A549 (cell line): ENCODE measurements at regions of chr4 and their contacts with region 1.

Region 1: GRCh38 chr4:76179398-76180318 is 31.5 kb upstream of the NUP54 start:
- DNase-seq: peak; percentile 78 to 84
- ATAC-seq: peak; percentile 94 to 98
- H3K4me3 ChIP-seq: no peak overlapping the region
- H3K27ac ChIP-seq: no peak overlapping the region
- H3K4me1 ChIP-seq: no peaks in the 10 kb centered on the region
- CTCF ChIP-seq: peak; percentile 76
- EP300 ChIP-seq: no peak
- POLR2A ChIP-seq: no peak
- RAD21 ChIP-seq: peak; percentile 77 to 84

Region 2: DNA sequence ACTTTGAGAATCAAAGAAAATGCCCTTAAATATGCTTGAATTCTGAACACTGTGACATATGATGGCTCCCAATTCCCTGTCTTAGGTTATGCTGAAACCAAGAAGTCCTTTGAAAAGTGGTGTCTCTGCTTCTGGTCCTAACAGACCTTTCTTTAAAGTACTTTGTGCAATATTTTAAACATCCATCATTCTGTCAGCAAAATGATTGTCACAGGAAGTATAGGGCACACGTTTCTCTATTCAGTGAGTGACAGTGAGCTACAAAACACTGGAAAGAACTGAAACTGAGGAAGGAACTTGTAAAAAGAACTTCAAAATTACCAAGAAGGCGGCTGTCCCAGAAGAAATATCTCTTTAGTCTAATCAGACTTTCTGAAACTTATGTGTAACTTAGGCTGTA is 19.3 kb before region 1 on chr4:
- CTCF ChIA-PET with region 1: interaction called, 18 read pairs
- POLR2A ChIA-PET with region 1: no interaction called
- DNase-seq: no peak
- ATAC-seq: no peak
- H3K4me3 ChIP-seq: no peak overlapping the region
- H3K27ac ChIP-seq: no peak overlapping the region
- H3K4me1 ChIP-seq: no peaks in the 10 kb centered on the region
- CTCF ChIP-seq: no peak
- EP300 ChIP-seq: no peak
- POLR2A ChIP-seq: no peak
- RAD21 ChIP-seq: no peak

Region 3: DNA sequence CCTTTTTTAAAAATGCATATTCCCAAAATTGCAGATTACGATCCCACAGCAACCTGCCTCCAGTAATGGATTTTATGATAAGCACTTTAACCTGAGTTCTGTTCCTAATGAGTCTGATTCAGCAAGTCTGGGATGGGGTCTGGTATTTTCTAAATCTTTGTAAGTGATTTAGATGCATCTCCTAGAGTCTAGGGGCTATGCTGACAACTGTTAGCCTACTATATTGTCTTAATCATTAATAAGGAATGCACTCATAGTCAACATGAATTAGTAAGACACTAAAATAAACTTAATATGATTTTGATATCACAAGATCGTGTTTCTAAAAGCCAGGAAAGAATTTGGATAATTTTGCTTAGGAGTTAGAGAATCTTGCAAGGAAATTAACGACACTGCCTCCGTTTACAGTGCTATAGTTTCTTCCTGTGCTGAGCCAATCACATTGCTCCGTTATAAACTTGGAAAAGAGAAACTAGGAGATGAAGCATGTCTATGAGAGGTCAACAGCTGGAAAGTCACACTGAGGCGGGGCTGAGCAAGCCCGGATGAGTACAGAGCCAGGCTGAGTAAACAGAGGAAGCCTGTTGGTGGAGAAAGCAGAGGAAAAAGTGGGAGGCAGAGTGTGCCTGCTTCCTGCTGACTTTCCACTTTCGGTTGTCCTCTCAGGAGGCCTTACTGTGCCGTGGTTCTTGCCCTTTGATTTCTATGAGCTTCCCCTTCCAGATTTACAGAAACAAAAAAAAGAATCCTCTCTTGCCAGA is 28.5 kb after region 1 on chr4:
- CTCF ChIA-PET with region 1: interaction called, 18 read pairs
- POLR2A ChIA-PET with region 1: no interaction called
- DNase-seq: peak in 1 of 2 experiments; percentile 63
- ATAC-seq: peak; percentile 85 to 89
- H3K4me3 ChIP-seq: peak overlapping the region; percentile 23; the same call in 2 of the 3 replicates
- H3K27ac ChIP-seq: peak overlapping the region; percentile 69 to 86
- H3K4me1 ChIP-seq: peaks cover 34% of the 10 kb centered on the region
- CTCF ChIP-seq: no peak
- EP300 ChIP-seq: no peak
- POLR2A ChIP-seq: no peak
- RAD21 ChIP-seq: no peak

Region 4: DNA sequence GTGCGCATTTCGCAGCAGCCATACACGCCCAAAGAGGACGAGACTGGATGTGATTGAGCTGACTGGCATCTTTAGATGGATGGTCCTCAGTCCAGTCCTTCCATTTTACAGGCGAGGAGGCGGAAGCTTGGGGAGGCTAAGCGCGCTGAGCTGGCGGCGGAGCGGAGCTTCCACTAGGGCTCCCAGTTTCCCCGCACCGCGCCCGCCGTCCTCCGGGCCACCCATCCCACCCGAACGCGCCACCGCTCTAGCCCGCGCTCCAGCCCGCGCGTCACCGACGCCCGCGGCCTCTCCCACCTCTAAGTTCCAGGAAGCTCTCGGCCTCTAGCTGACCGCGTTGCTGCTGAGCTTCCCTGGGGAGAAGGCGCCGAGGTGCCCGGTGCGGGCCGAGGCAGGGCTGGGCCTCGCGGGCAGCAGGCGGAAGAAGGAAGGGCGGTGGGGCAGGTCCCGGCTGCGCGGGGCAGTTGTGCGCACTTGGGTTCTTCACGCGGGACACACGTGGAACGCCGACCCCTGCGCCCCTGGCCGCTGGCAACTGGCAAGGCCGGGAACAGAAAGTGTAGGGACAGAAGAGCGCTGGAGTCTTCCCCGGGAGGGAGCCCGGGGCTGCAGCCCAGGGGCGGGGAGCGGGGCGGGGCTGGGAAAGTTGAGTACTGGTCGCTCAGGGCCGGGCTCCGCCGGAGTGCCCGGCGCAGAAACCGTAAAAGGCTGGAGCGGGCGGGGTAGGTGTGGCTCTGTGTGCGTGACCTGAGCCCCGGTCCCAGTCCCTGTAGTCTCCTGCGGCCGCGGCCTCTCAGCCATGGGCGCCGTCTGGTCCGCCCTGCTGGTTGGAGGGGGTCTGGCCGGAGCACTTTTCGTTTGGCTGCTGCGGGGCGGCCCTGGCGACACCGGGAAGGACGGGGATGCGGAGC is 126.6 kb after region 1 on chr4 and contains the start of gene STBD1:
- CTCF ChIA-PET with region 1: interaction called, 34 read pairs
- POLR2A ChIA-PET with region 1: interaction called, 5 read pairs
- DNase-seq: peak; percentile 44 to 69
- ATAC-seq: peak; percentile 84 to 89
- H3K4me3 ChIP-seq: peak within 1 kb of the TSS; percentile 93
- H3K27ac ChIP-seq: peak within 1 kb of the TSS; percentile 97 to 99
- H3K4me1 ChIP-seq: peaks cover 28% of the 10 kb centered on the region
- CTCF ChIP-seq: no peak
- EP300 ChIP-seq: no peak
- POLR2A ChIP-seq: peak; percentile 41
- RAD21 ChIP-seq: no peak
- polyA plus RNA-seq, gene STBD1: 1.2 and 1.3 TPM in 2 replicates

Region 5: DNA sequence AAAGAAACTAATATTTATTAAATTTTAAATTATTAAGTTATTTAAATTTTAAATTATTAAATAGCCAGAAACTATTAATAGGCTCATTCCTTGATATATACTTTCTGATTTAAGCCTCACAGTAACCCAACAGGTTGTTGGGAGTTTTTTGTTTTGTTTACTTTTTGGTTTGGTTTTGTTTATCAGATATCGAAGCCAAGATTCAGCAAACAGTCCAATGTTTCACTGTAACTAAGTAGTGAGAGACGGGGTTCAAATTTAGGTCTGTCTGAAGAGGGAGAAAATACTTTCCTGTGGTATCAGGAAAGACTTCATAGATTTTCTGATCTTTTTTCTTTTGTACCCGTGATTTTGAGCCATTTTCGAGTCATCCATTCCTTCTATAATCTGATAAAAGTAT is 187.1 kb after region 1 on chr4:
- CTCF ChIA-PET with region 1: no interaction called
- POLR2A ChIA-PET with region 1: no interaction called
- DNase-seq: no peak
- ATAC-seq: no peak
- H3K4me3 ChIP-seq: no peak overlapping the region
- H3K27ac ChIP-seq: no peak overlapping the region
- H3K4me1 ChIP-seq: no peaks in the 10 kb centered on the region
- CTCF ChIP-seq: no peak
- EP300 ChIP-seq: no peak
- POLR2A ChIP-seq: no peak
- RAD21 ChIP-seq: no peak

Region 6: DNA sequence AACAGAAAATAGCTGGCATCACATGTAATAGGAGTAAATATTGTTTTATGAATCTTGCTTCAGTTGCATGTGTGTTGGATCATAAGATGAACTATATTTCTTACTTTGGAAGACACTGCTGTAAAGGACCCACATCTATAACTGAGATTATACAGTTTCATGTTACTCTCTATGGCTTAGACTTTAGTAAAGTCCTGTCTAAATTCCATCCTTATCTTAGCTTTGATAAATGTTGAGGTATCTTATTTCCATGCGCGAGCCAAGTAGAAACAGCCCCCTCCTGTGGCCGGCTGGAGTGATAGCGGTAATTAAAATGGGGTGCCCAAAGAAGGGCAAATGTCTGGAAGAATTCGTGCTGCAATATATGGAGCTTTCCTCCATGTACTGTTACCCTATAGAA is 198.3 kb after region 1 on chr4:
- CTCF ChIA-PET with region 1: interaction called, 37 read pairs
- POLR2A ChIA-PET with region 1: no interaction called
- DNase-seq: peak; percentile 15 to 31
- ATAC-seq: peak; percentile 19 to 72; a peak in 4 of 6 replicates
- H3K4me3 ChIP-seq: no peak overlapping the region
- H3K27ac ChIP-seq: peak overlapping the region; percentile 49; a peak in 2 of 6 replicates
- H3K4me1 ChIP-seq: peaks cover 43% of the 10 kb centered on the region
- CTCF ChIP-seq: peak; percentile 54
- EP300 ChIP-seq: no peak
- POLR2A ChIP-seq: no peak
- RAD21 ChIP-seq: peak; percentile 59 to 67